MCF 10A (cell line): ENCODE measurements at regions of chr7 and their contacts with region 1.

Region 1: GRCh38 chr7:131688738-131689661 is 132.6 kb upstream of the PODXL start:
- DNase-seq: peak; percentile 70
- H3K4me3 Mint-ChIP-seq: no peak overlapping the region
- H3K27ac Mint-ChIP-seq: no peak overlapping the region
- H3K4me1 Mint-ChIP-seq: peaks cover 6% of the 10 kb centered on the region
- H3K27me3 Mint-ChIP-seq: peaks cover 89% of the 10 kb centered on the region
- CTCF ChIP-seq: peak; percentile 89

Region 2: DNA sequence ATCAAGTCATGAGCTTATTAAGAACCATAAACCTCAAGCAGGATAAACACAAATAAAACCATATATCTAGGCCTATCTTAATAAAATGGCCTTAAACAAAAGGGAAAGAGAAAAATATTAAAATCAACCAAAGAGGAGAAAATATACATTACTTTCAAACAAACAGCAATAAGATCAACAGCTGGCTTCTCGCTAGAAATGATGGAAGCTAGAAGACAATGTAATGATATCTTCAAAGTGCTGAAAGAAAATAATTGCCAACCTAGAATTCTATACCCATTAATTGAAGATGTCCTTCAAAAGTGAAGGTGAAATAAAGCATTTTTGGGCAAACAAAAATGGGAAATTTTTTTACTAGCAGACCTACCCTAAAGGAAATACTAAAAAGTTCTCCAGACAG is 10.3 kb after region 1 on chr7:
- CTCF ChIA-PET with region 1: interaction called, 10 read pairs
- POLR2A ChIA-PET with region 1: no interaction called
- intact Hi-C with region 1: no loop called
- DNase-seq: no peak
- H3K4me3 Mint-ChIP-seq: no peak overlapping the region
- H3K27ac Mint-ChIP-seq: no peak overlapping the region
- H3K4me1 Mint-ChIP-seq: no peaks in the 10 kb centered on the region
- H3K27me3 Mint-ChIP-seq: peaks cover 32% of the 10 kb centered on the region
- CTCF ChIP-seq: no peak

Region 3: GRCh38 chr7:132049462-132050304 is 360.7 kb after region 1 on chr7:
- CTCF ChIA-PET with region 1: interaction called, 11 read pairs
- POLR2A ChIA-PET with region 1: no interaction called
- intact Hi-C with region 1: no loop called
- DNase-seq: peak; percentile 54
- H3K4me3 Mint-ChIP-seq: no peak overlapping the region
- H3K27ac Mint-ChIP-seq: no peak overlapping the region
- H3K4me1 Mint-ChIP-seq: no peaks in the 10 kb centered on the region
- H3K27me3 Mint-ChIP-seq: peaks cover 23% of the 10 kb centered on the region
- CTCF ChIP-seq: peak; percentile 48

Region 4: GRCh38 chr7:132145466-132145865 is 456.5 kb after region 1 on chr7:
- CTCF ChIA-PET with region 1: interaction called, 4 read pairs
- POLR2A ChIA-PET with region 1: no interaction called
- intact Hi-C with region 1: loop called (anchors 5 kb)
- DNase-seq: peak; percentile 90
- H3K4me3 Mint-ChIP-seq: no peak overlapping the region
- H3K27ac Mint-ChIP-seq: no peak overlapping the region
- H3K4me1 Mint-ChIP-seq: peaks cover 6% of the 10 kb centered on the region
- H3K27me3 Mint-ChIP-seq: peaks cover under 1% of the 10 kb centered on the region
- CTCF ChIP-seq: peak; percentile 13

Region 5: DNA sequence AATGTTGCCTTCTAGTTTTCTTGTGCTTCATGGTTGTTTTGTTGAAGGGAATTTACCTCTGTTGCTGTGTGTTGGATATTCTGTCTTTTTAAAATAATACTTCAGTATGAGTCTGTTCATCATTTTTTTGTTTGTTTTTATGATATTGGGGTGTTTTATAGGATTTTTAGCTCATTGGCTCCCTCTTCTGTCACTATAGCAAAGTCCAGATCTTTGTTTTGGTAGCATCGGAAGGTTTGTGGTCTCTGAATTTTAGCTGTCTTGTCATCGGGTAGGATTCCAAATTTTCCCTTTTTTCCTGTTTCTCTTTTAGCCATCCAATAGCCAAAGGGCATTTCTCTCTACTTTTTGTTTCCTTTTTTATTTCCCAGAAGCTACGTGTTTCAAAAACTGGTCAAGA is 1655.3 kb after region 1 on chr7:
- CTCF ChIA-PET with region 1: no interaction called
- POLR2A ChIA-PET with region 1: no interaction called
- intact Hi-C with region 1: loop called (anchors 5 kb)
- DNase-seq: peak; percentile 6
- H3K4me3 Mint-ChIP-seq: no peak overlapping the region
- H3K27ac Mint-ChIP-seq: no peak overlapping the region
- H3K4me1 Mint-ChIP-seq: peaks cover 8% of the 10 kb centered on the region
- H3K27me3 Mint-ChIP-seq: no peaks in the 10 kb centered on the region
- CTCF ChIP-seq: peak; percentile 40